Heart left ventricle (tissue), 16 donors: ENCODE measurements at regions of chr1 and their contacts with region 1.

Region 1: GRCh38 chr1:170903961-170904360 is 31.4 kb upstream of the MROH9 start:
- DNase-seq: no peak
- ATAC-seq: peak in 1 of 4 donors; percentile 34
- H3K4me3 ChIP-seq: no peak overlapping the region
- H3K27ac ChIP-seq: peak overlapping the region in 2 of 12 donors; percentile 24 to 52
- H3K4me1 ChIP-seq: peaks cover 0 to 15% (median 0%) of the 10 kb centered on the region in 12 donors
- H3K27me3 ChIP-seq: no peaks in the 10 kb centered on the region
- CTCF ChIP-seq: no peak
- POLR2A ChIP-seq: no peak

Region 2: GRCh38 chr1:169753552-169753951 is 1150.4 kb before region 1 on chr1:
- intact Hi-C with region 1: loop called in 1 of 10 experiments (anchors 10 kb)
- DNase-seq: no peak
- ATAC-seq: no peak
- H3K4me3 ChIP-seq: no peak overlapping the region
- H3K27ac ChIP-seq: no peak overlapping the region
- H3K4me1 ChIP-seq: no peaks in the 10 kb centered on the region
- H3K27me3 ChIP-seq: peaks cover 0 to 5% (median 0%) of the 10 kb centered on the region in 9 donors
- CTCF ChIP-seq: no peak
- POLR2A ChIP-seq: no peak

Region 3: GRCh38 chr1:170864238-170864637 is 39.7 kb before region 1 on chr1:
- intact Hi-C with region 1: no loop called
- DNase-seq: peak in 4 of 5 donors; percentile 29 to 59 (median 52)
- ATAC-seq: peak; percentile 33 to 89 (median 68)
- H3K4me3 ChIP-seq: no peak overlapping the region
- H3K27ac ChIP-seq: peak overlapping the region in 7 of 12 donors; percentile 18 to 52 (median 29)
- H3K4me1 ChIP-seq: peaks cover 0 to 30% (median 3%) of the 10 kb centered on the region in 12 donors
- H3K27me3 ChIP-seq: no peaks in the 10 kb centered on the region
- CTCF ChIP-seq: no peak
- POLR2A ChIP-seq: no peak

Region 4: DNA sequence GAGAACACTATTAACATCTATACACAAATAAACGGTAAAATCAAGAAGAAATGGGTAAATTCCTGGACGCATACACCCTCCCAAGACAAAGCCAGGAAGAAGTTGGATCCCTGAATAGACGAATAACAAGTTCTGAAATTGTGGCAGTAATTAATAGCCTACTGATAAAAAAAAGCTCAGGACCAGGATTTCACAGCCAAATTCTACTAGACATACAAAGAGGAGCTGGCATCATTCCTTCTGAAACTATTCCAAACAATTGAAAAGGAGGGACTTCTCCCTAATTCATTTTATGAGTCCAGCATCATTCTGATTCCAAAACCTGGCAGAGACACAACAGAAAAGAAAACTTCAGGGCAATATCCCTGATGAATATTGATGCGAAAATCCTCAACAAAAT is 116.0 kb after region 1 on chr1:
- intact Hi-C with region 1: no loop called
- DNase-seq: no peak
- ATAC-seq: no peak
- H3K4me3 ChIP-seq: no peak overlapping the region
- H3K27ac ChIP-seq: no peak overlapping the region
- H3K4me1 ChIP-seq: no peaks in the 10 kb centered on the region
- H3K27me3 ChIP-seq: no peaks in the 10 kb centered on the region
- CTCF ChIP-seq: no peak
- POLR2A ChIP-seq: no peak

Region 5: DNA sequence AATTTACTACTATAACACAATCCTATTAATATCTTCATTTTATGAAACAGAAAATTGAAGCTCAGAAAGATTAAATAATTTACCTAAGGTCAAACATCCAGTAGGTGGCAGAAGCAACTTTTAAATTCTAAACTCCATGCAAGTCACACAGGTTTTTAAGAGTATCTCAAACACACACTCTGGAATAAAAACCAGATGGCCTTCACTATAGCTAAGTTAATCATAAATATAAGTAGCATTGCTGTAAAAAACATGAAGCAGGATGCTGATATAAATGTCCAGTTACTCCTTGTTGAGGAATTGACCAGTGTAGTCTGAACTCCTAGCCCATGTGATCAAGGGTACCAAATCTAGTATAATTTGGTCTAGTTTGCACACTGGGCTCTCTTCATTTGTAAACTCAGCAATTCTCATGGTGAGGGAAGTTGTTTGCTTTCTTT is 177.4 kb after region 1 on chr1:
- intact Hi-C with region 1: no loop called
- DNase-seq: no peak
- ATAC-seq: peak in 2 of 4 donors; percentile 46 to 50
- H3K4me3 ChIP-seq: peak overlapping the region in 1 of 12 donors; percentile 4
- H3K27ac ChIP-seq: peak overlapping the region in 9 of 12 donors; percentile 13 to 76 (median 51)
- H3K4me1 ChIP-seq: peaks cover 0 to 29% (median 9%) of the 10 kb centered on the region in 12 donors
- H3K27me3 ChIP-seq: no peaks in the 10 kb centered on the region
- CTCF ChIP-seq: peak; percentile 36 to 71 (median 62)
- POLR2A ChIP-seq: no peak